Left cardiac atrium (tissue), 4 donors: ENCODE measurements at regions of chr3 and their contacts with region 1.

Region 1: DNA sequence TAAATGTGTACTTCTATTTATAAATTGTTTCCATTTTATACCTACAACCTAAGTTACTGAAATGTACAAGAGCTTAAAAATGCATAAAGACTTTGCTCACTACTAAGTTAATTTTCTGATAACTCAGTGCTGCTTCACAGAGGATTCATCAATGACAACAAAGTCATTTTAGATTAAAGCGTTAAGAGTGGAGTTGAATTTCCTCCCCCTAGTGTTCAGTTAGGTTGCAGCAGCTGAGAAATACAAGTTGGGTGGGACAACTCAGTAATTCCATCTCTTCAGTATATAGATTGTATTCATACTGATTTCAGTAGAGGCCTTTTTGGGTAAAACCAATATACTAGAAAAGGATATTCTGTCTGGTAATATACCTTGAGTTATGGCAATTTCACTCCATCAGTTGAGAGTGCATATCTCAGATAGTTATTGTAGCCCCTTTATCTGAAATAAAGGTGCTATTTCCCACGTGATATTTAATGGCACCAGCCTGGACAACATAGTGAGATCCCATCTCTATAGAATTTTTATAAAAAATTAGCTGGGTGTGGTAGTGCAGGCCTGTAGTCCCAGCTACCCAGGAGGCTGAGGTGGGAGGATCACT is 6.9 kb upstream of the RPL35A start:
- DNase-seq: no peak
- ATAC-seq: peak in 1 of 2 donors; percentile 31

Region 2: GRCh38 chr3:197417441-197417840 is 525.6 kb before region 1 on chr3:
- intact Hi-C with region 1: no loop called
- DNase-seq: no peak
- ATAC-seq: peak; percentile 44 to 62

Region 3: GRCh38 chr3:197892162-197892561 is 50.9 kb before region 1 on chr3:
- intact Hi-C with region 1: no loop called
- DNase-seq: no peak
- ATAC-seq: no peak

Region 4: GRCh38 chr3:197906023-197906849 is 36.8 kb before region 1 on chr3:
- intact Hi-C with region 1: loop called in 1 of 2 experiments (anchors 5 kb)
- DNase-seq: peak; percentile 91
- ATAC-seq: peak; percentile 98 to 99

Region 5: GRCh38 chr3:197963019-197963637 is 20.1 kb after region 1 on chr3:
- intact Hi-C with region 1: no loop called
- DNase-seq: no peak
- ATAC-seq: no peak

Region 6: GRCh38 chr3:197989651-197990050 is 46.6 kb after region 1 on chr3:
- intact Hi-C with region 1: no loop called
- DNase-seq: no peak
- ATAC-seq: no peak